Activated CD8-positive, alpha-beta T cell treated with anti-CD3 and anti-CD28 coated beads, Interleukin-2, amount 10 ng/mL, durations not matched to agents 7 days and 5 days (primary cell): ENCODE measurements at regions of chr1 and their contacts with region 1.

Region 1: DNA sequence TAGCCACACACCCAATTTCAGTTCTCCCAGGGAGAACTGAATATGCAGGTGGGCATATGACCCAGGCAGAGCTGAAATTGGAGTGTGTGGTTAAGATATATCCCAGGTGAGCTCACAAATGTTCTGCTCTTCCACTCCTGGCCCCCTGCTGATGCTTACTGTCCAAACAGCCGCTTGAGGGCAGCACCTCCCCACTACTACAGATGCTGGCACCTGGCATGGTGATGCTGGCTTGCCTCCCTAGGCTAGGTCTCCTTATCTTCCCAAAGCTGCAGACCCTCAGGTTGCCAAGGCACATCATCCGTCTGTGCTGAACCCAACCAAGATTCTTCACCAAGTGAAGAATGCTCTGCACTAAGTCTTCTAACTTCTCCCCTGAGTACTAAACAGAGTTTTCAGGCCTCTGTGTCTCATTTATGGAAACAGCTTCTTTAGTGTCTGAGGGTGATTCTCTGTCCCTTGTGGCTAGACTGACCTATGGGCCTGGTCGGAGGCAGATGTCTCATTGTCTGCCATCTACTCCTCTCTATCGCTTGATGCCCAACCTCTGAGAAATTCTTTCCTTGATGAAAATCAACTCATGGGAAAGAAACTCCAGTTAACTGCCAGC is 27.2 kb downstream of the XCL1 start:
- DNase-seq: peak; percentile 81
- ATAC-seq: peak; percentile 95
- H3K4me3 Mint-ChIP-seq: no peak overlapping the region
- H3K27ac Mint-ChIP-seq: no peak overlapping the region
- H3K4me1 Mint-ChIP-seq: peaks cover 13% of the 10 kb centered on the region
- H3K27me3 Mint-ChIP-seq: peaks cover 6% of the 10 kb centered on the region

Region 2: DNA sequence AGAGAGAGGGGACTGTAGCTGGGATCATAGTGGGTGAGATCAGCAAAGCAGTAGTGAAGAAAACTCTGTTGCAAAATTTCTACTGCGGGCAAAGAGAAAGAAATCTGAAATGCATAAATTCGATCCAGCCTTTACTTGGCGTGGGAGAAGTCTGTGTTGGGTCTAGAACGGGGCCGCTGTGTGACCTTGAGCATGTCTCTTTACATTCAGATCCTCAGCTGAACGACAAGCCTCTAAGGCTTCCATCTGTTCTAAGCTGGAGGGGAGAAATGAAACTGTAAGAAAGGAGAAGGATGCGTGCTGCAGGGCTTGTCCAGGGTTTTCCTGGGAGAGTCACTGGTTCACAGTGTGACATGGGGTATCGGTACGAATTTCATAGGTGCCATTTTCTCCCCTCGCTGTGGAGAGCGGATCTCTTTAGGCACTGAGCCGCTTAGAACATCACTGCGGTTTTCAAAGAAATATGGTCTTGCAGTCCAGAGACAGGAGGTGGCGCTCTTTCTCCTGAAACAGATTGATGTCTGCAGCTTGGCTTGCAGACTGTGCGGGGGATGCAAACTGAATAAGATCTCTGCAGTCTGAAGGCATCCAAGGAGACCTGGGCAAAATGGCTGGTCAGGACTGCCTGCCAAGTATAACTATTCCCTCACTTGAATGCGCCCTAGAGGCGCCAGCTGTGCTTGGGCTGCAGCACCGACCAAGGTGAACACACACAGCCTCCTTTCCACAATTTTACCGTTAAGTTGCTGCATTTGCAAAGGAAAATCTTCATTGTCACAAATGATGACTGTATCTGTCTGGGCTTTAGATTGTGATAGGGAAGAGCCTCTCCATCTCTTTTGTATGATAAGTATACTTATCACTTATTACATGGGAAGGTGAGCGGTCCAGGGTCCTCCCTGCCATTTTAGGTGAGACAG is 163.9 kb before region 1 on chr1:
- CTCF ChIA-PET with region 1: interaction called, 74 read pairs
- POLR2A ChIA-PET with region 1: interaction called, 4 read pairs
- DNase-seq: peak; percentile 96
- ATAC-seq: peak; percentile 86
- H3K4me3 Mint-ChIP-seq: peak overlapping the region; percentile 47
- H3K27ac Mint-ChIP-seq: peak overlapping the region; percentile 82
- H3K4me1 Mint-ChIP-seq: peaks cover 65% of the 10 kb centered on the region
- H3K27me3 Mint-ChIP-seq: no peaks in the 10 kb centered on the region

Region 3: GRCh38 chr1:168488138-168488537 is 115.5 kb before region 1 on chr1:
- CTCF ChIA-PET with region 1: no interaction called
- POLR2A ChIA-PET with region 1: no interaction called
- DNase-seq: no peak
- ATAC-seq: no peak
- H3K4me3 Mint-ChIP-seq: no peak overlapping the region
- H3K27ac Mint-ChIP-seq: no peak overlapping the region
- H3K4me1 Mint-ChIP-seq: peaks cover 65% of the 10 kb centered on the region
- H3K27me3 Mint-ChIP-seq: no peaks in the 10 kb centered on the region

Region 4: DNA sequence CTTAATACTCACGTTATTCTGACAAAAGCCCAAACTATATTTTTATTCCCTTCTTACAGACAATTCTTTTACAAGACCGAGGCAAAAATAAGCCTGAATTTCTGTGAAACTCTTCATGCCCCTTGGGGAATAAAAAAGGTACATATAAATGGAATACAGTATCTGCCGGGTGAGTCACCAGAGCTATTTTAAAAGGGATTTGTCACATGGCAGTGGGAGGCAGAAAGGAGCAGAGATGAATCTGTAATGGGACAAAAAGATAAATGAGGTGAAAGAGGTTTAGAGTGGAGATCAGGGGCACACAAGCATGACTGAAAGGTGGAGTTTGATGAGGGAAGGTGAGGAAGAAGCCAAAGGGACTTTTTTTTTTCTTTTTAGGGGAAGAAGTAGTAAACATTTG is 18.4 kb before region 1 on chr1:
- CTCF ChIA-PET with region 1: interaction called, 17 read pairs
- POLR2A ChIA-PET with region 1: no interaction called
- DNase-seq: no peak
- ATAC-seq: no peak
- H3K4me3 Mint-ChIP-seq: no peak overlapping the region
- H3K27ac Mint-ChIP-seq: no peak overlapping the region
- H3K4me1 Mint-ChIP-seq: peaks cover 7% of the 10 kb centered on the region
- H3K27me3 Mint-ChIP-seq: no peaks in the 10 kb centered on the region

Region 5: GRCh38 chr1:168613691-168614231 is 10.2 kb after region 1 on chr1:
- CTCF ChIA-PET with region 1: interaction called, 20 read pairs
- POLR2A ChIA-PET with region 1: no interaction called
- DNase-seq: no peak
- ATAC-seq: no peak
- H3K4me3 Mint-ChIP-seq: no peak overlapping the region
- H3K27ac Mint-ChIP-seq: no peak overlapping the region
- H3K4me1 Mint-ChIP-seq: no peaks in the 10 kb centered on the region
- H3K27me3 Mint-ChIP-seq: peaks cover 6% of the 10 kb centered on the region

Region 6: GRCh38 chr1:168767894-168768584 is 164.4 kb after region 1 on chr1:
- CTCF ChIA-PET with region 1: no interaction called
- POLR2A ChIA-PET with region 1: no interaction called
- DNase-seq: no peak
- ATAC-seq: no peak
- H3K4me3 Mint-ChIP-seq: no peak overlapping the region
- H3K27ac Mint-ChIP-seq: no peak overlapping the region
- H3K4me1 Mint-ChIP-seq: no peaks in the 10 kb centered on the region
- H3K27me3 Mint-ChIP-seq: peaks cover 7% of the 10 kb centered on the region

Region 7: GRCh38 chr1:168834225-168834872 is 230.7 kb after region 1 on chr1:
- CTCF ChIA-PET with region 1: no interaction called
- POLR2A ChIA-PET with region 1: no interaction called
- DNase-seq: no peak
- ATAC-seq: no peak
- H3K4me3 Mint-ChIP-seq: no peak overlapping the region
- H3K27ac Mint-ChIP-seq: peak overlapping the region; percentile 56
- H3K4me1 Mint-ChIP-seq: peaks cover 12% of the 10 kb centered on the region
- H3K27me3 Mint-ChIP-seq: no peaks in the 10 kb centered on the region

Region 8: GRCh38 chr1:169326956-169327268 is 723.3 kb after region 1 on chr1:
- CTCF ChIA-PET with region 1: interaction called, 10 read pairs
- POLR2A ChIA-PET with region 1: no interaction called
- DNase-seq: no peak
- ATAC-seq: peak; percentile 15
- H3K4me3 Mint-ChIP-seq: no peak overlapping the region
- H3K27ac Mint-ChIP-seq: no peak overlapping the region
- H3K4me1 Mint-ChIP-seq: peaks cover 10% of the 10 kb centered on the region
- H3K27me3 Mint-ChIP-seq: no peaks in the 10 kb centered on the region

Region 9: DNA sequence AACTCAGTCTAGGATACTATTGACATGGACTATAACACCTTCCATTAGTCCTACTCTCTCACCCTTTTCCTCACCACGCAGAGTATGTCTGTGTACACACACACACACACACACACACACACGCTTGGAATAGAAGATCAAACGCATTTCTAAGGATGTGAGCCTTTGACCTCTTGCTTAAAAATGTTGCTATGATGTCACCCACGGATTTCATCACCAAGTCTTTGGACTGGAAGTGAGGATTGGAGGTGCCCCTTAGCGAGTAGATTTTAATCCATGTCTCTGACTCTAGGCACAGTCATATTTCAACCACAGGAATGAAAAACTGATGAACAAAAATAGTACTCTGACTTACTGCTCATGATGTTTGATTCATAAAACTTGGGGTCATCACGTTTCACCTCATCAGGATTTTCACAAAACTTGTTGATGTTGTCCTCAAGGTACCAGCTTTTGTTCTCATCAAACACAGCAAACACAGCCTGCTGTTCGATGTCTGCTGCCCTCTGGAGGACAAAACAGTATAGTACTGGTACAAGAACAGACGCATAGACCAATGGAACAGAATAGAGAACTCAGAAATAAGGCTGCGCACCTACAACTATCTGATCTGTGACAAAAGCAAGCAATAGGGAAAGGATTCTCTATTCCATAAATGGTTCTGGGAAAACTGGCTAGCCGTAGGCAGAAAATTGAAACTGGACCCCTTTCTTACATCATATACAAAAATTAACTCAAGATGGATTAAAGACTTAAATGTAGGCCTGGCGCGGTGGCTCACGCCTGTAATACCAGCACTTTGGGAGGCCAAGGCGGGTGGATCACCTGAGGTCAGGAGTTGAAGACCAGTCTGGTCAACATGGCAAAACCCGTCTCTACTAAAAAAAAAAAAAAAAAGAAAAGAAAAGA is 942.7 kb after region 1 on chr1:
- CTCF ChIA-PET with region 1: interaction called, 19 read pairs
- POLR2A ChIA-PET with region 1: no interaction called
- DNase-seq: peak; percentile 77
- ATAC-seq: peak; percentile 93
- H3K4me3 Mint-ChIP-seq: no peak overlapping the region
- H3K27ac Mint-ChIP-seq: no peak overlapping the region
- H3K4me1 Mint-ChIP-seq: no peaks in the 10 kb centered on the region
- H3K27me3 Mint-ChIP-seq: no peaks in the 10 kb centered on the region